A673 (cell line): ENCODE measurements at regions of chr10 and their contacts with region 1.

Region 1: DNA sequence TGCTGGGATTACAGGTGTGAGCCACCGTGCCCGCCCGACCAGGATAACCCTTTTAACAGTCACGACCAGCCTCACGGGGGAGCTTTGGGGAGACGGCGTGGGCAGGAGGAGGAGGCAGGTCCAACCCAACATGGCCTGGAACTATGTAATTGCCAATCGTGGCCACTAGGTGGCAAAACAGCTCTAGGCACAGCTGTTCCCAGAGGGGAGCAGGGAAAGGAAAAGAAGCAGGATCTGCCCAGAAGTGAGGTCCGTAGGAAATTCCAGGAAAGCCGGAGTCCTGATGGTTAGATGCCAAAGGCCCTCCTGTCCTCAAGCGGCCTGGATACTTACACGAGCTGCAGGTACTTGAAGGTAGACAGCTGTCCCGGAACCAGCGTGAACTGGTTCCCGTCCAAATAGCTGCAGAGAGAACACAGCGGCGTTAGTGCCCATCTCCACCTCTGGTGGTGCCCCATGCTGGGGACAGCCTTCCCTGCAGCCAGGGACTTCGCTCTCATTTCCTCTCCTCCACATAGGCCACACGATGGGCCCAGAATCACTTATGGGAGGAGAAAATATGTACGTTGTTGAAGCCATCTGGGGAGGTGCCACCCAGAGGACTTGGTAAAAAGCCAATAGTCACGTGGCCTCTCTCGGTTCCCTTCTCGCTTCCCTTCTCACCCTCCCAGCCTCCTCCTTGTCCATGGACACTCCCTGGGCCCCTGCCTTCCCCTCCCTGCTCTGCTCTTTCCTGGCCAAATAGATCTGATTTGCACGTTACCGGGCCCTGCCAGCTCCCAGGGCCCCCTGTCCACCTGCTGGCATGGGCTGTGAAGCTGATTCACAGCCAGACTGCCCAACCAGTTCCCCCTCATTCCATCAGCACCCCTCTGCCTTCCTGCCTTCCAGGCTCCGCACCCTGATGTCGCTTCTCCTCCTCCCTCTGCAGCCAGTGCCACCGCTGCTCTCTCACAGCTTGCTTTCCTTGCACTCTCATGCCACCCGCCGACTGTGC is 148.1 kb downstream of the SLIT1 start:
- DNase-seq: peak; percentile 88
- H3K4me3 ChIP-seq: peak overlapping the region; percentile 41
- H3K27ac ChIP-seq: no peak overlapping the region
- H3K4me1 ChIP-seq: no peaks in the 10 kb centered on the region
- H3K27me3 ChIP-seq: no peaks in the 10 kb centered on the region
- CTCF ChIP-seq: peak; percentile 89

Region 2: DNA sequence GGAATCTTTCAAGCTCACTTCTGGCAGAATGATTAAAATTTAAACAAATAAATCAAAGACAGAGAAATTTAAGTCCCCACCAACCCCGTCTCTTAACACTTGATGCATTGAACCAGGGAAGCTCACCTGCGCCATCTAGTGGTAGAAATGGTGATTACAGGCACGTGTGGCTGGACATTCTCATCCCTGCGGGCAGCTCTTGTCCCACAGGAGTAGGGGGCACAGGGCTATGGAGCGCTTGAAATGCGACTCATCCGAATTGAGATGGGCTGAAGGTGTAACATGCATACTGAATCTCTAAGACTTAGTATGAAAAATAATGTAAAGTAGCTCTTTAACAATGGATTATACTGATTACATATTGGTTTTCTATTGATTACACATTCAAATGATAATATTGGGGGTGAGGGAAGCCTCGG is 172.9 kb after region 1 on chr10:
- CTCF ChIA-PET with region 1: interaction called, 20 read pairs
- POLR2A ChIA-PET with region 1: no interaction called
- intact Hi-C with region 1: no loop called
- DNase-seq: peak; percentile 79
- H3K4me3 ChIP-seq: no peak overlapping the region
- H3K27ac ChIP-seq: no peak overlapping the region
- H3K4me1 ChIP-seq: no peaks in the 10 kb centered on the region
- H3K27me3 ChIP-seq: no peaks in the 10 kb centered on the region
- CTCF ChIP-seq: peak; percentile 96

Region 3: GRCh38 chr10:97737770-97738265 is 700.2 kb after region 1 on chr10:
- CTCF ChIA-PET with region 1: no interaction called
- POLR2A ChIA-PET with region 1: no interaction called
- intact Hi-C with region 1: no loop called
- DNase-seq: no peak
- H3K4me3 ChIP-seq: peak overlapping the region; percentile 80
- H3K27ac ChIP-seq: peak overlapping the region; percentile 87
- H3K4me1 ChIP-seq: peaks cover 15% of the 10 kb centered on the region
- H3K27me3 ChIP-seq: no peaks in the 10 kb centered on the region
- CTCF ChIP-seq: no peak